Prostate gland (tissue), 2 donors: ENCODE measurements at regions of chr18 and their contacts with region 1.

Region 1: GRCh38 chr18:79528846-79529245 is 133.1 kb downstream of the NFATC1 start:
- DNase-seq: peak; percentile 72
- H3K4me3 ChIP-seq: no peak overlapping the region
- H3K27ac ChIP-seq: no peak overlapping the region
- H3K4me1 ChIP-seq: peaks cover 7% of the 10 kb centered on the region
- H3K27me3 ChIP-seq: no peaks in the 10 kb centered on the region
- CTCF ChIP-seq: peak; percentile 84 to 91 (median 87)
- POLR2A ChIP-seq: no peak

Region 2: GRCh38 chr18:79378542-79379250 is 150.2 kb before region 1 on chr18:
- intact Hi-C with region 1: loop called (anchors 2 kb)
- DNase-seq: peak; percentile 74
- H3K4me3 ChIP-seq: no peak overlapping the region
- H3K27ac ChIP-seq: no peak overlapping the region
- H3K4me1 ChIP-seq: no peaks in the 10 kb centered on the region
- H3K27me3 ChIP-seq: no peaks in the 10 kb centered on the region
- CTCF ChIP-seq: peak; percentile 85 to 97 (median 95)
- POLR2A ChIP-seq: no peak

Region 3: GRCh38 chr18:79395761-79396387 is 133.0 kb before region 1 on chr18 and contains the start of gene NFATC1:
- intact Hi-C with region 1: loop called (anchors 5 kb)
- DNase-seq: peak; percentile 55
- H3K4me3 ChIP-seq: peak within 1 kb of the TSS; percentile 45 to 54
- H3K27ac ChIP-seq: peak within 1 kb of the TSS; percentile 68 to 84
- H3K4me1 ChIP-seq: peaks cover 3% of the 10 kb centered on the region
- H3K27me3 ChIP-seq: no peaks in the 10 kb centered on the region
- CTCF ChIP-seq: peak in 1 of 4 experiments; percentile 16
- POLR2A ChIP-seq: peak; percentile 35
- total RNA-seq, gene NFATC1: 16.8 to 24.6 TPM

Region 4: DNA sequence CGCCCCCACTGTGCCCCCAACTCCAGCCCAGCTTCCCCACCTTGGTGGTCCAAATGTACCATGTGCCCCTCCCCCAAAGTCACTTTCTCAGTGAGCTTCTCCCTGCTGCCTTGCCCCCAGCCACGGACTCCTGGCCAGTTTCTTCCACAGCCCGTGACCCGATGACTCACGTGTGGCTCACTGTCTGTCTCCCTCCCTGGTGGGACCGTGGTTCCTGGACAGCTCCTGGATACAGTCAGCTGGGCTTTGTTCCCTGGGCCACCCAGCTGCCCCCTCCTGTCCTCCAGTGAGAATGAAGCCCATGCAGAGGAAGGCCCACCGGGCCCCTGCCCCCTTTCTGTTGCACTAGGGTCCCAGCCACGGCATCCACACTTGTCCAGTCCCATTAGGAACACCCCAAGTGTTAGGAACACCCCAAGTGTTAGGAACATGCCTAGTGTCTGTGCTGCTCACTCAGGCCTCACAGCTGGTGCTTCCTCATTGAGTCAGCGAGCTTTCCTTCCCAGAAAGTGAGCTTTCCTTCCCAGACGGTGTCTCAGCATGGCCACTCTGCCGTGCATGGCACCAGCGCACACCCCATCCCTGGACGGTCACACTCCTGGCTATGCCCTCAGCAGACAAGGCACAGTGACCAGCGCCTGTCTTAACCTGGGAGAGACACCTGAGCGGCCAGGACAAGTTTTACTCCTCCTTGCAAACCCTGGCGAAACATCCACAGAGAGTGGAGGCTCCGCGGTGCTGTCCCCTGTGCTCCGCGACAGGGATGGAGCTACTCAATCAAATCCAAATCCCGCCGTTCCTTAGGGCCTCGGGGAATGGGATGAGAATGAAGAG is 106.0 kb after region 1 on chr18:
- intact Hi-C with region 1: loop called (anchors 5 kb)
- DNase-seq: no peak
- H3K4me3 ChIP-seq: no peak overlapping the region
- H3K27ac ChIP-seq: no peak overlapping the region
- H3K4me1 ChIP-seq: no peaks in the 10 kb centered on the region
- H3K27me3 ChIP-seq: peaks cover 4% of the 10 kb centered on the region
- CTCF ChIP-seq: no peak
- POLR2A ChIP-seq: no peak

Region 5: GRCh38 chr18:79924814-79925731 is 396.2 kb after region 1 on chr18:
- intact Hi-C with region 1: no loop called
- DNase-seq: no peak
- H3K4me3 ChIP-seq: no peak overlapping the region
- H3K27ac ChIP-seq: no peak overlapping the region
- H3K4me1 ChIP-seq: peaks cover 5% of the 10 kb centered on the region
- H3K27me3 ChIP-seq: no peaks in the 10 kb centered on the region
- CTCF ChIP-seq: peak in 1 of 4 experiments; percentile 10
- POLR2A ChIP-seq: no peak